ENCODE measurements at regions of chr12 and their contacts with region 1.

Region 1: GRCh38 chr12:52004042-52004648 is 2.6 kb upstream of the TAMALIN start:
- DNase-seq: peak in 4 of 5 donors; percentile 59 to 64 (median 60)
- ATAC-seq: peak; percentile 16 to 40 (median 30)
- H3K4me3 ChIP-seq: no peak overlapping the region
- H3K27ac ChIP-seq: no peak overlapping the region
- H3K4me1 ChIP-seq: peaks cover 0 to 47% (median 17%) of the 10 kb centered on the region in 12 donors
- H3K27me3 ChIP-seq: peaks cover 0 to 20% (median 4%) of the 10 kb centered on the region in 9 donors
- CTCF ChIP-seq: peak; percentile 48 to 77 (median 70)
- POLR2A ChIP-seq: no peak

Region 2: GRCh38 chr12:52087961-52088820 is 84.0 kb after region 1 on chr12:
- intact Hi-C with region 1: loop called in 6 of 10 experiments (anchors 5 kb)
- DNase-seq: no peak
- ATAC-seq: no peak
- H3K4me3 ChIP-seq: no peak overlapping the region
- H3K27ac ChIP-seq: no peak overlapping the region
- H3K4me1 ChIP-seq: peaks cover 0 to 4% (median 2%) of the 10 kb centered on the region in 12 donors
- H3K27me3 ChIP-seq: peaks cover 0 to 22% (median 6%) of the 10 kb centered on the region in 9 donors
- CTCF ChIP-seq: no peak
- POLR2A ChIP-seq: no peak